Gastrocnemius medialis (tissue), 4 donors: ENCODE measurements at regions of chr11 and their contacts with region 1.

Region 1: DNA sequence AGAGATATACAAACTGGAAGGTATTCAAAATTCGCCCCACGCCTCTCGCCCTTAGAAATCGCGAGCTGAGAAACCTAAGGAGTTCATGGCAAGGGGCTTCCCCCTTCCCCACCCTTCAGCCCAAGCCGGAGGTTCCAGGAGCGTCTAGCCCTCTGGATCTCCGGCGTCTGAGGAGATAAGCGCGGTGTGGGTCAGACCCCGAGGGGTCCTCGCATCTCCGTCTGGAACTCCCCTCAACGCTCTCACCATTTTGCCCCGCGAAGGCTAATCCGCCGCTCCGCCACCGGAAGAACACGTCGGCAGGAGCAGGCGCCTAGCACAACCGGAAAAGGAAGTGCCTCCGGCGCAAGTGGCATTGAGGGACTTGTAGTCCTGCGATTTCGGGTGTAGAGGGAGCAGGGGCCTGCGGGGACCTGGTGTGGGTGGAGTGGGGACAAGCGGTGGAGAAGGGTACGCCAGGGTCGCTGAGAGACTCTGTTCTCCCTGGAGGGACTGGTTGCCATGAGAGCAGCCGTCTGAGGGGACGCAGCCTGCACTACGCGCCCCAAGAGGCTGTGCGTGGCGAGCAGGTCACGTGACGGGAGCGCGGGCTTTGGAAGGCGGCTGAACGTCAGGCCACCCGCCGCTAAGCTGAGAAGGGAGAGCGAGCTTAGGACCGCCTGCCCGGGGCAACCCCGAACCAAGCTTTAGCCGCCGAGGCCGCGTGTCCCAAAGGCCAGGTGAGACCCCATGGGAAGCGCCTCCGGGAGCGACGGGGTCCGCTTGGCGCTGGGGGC is at the starts of genes FEN1 and TMEM258:
- DNase-seq: peak; percentile 81 to 83
- ATAC-seq: peak; percentile 95 to 98
- H3K4me3 ChIP-seq: peak within 1 kb of the TSS; percentile 73 to 97 (median 88)
- H3K27ac ChIP-seq: peak within 1 kb of the TSS; percentile 90 to 98 (median 96)
- H3K4me1 ChIP-seq: peaks cover 20 to 22% of the 10 kb centered on the region in 2 donors
- H3K27me3 ChIP-seq: no peaks in the 10 kb centered on the region
- CTCF ChIP-seq: peak in 3 of 5 experiments; percentile 35 to 39 (median 37)
- POLR2A ChIP-seq: peak; percentile 58
- total RNA-seq, gene FEN1: 7.4 to 15.7 (median 9.5) TPM
- total RNA-seq, gene TMEM258: 36.5 to 51.8 (median 47.2) TPM

Region 2: DNA sequence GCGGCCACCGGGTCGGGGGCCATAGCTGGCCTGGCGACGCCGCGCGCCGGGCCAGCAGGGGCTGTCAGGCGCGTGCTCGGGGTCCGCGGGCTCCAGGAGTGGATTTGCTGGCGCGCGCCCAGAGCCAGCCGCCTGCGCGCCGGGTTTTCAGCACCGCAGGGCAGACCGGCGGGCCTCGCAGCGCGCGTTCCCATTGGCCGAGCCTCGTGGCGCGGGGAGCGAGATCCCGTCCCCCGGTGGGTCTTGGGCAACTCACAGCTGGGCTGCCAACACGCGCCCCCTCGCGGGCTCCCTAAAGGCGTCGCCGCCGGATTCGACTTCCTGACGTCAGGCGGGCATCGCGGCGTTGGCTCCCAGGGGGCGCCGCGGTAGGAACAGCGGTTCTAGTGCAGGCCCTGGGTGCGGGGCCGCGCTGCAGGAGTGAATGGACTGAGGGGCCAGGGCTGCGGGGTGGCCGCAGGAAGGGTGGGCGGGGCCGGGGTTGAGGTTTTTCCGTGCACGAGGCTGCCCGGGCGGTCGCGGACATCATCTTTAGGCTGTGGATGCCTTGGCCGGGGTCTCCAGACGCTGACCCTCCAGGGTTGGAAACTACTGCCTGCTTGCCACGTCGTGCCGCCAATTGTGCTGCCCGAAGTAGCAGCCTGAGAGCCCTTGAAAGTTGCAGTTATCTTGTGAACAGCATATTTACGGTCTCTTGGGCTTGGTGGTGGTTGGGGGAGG is 24.4 kb after region 1 on chr11 and contains the start of gene FADS1:
- in situ Hi-C with region 1: no loop called
- intact Hi-C with region 1: loop called (anchors 1 kb)
- DNase-seq: peak; percentile 57 to 79
- ATAC-seq: peak; percentile 17 to 25
- H3K4me3 ChIP-seq: peak within 1 kb of the TSS; percentile 64 to 88 (median 80)
- H3K27ac ChIP-seq: peak within 1 kb of the TSS; percentile 87 to 92 (median 90)
- H3K4me1 ChIP-seq: peaks cover 11 to 17% of the 10 kb centered on the region in 2 donors
- H3K27me3 ChIP-seq: no peaks in the 10 kb centered on the region
- CTCF ChIP-seq: peak in 3 of 5 experiments; percentile 33 to 50 (median 48)
- POLR2A ChIP-seq: peak; percentile 40 to 62
- total RNA-seq, gene FADS1: 25.4 to 209 (median 62.5) TPM

Region 3: GRCh38 chr11:61891331-61892084 is 99.0 kb after region 1 on chr11 and contains the start of gene FADS3:
- in situ Hi-C with region 1: loop called in 1 of 4 experiments (anchors 10 kb)
- intact Hi-C with region 1: loop called (anchors 1 kb)
- DNase-seq: peak; percentile 84 to 92
- ATAC-seq: peak; percentile 53 to 58
- H3K4me3 ChIP-seq: peak within 1 kb of the TSS; percentile 73 to 98 (median 90)
- H3K27ac ChIP-seq: peak within 1 kb of the TSS; percentile 82 to 96 (median 92)
- H3K4me1 ChIP-seq: peaks cover 32 to 34% of the 10 kb centered on the region in 2 donors
- H3K27me3 ChIP-seq: no peaks in the 10 kb centered on the region
- CTCF ChIP-seq: peak in 4 of 5 experiments; percentile 4 to 30 (median 15)
- POLR2A ChIP-seq: peak; percentile 92 to 98
- total RNA-seq, gene FADS3: 40.7 to 196 (median 89.0) TPM

Region 4: GRCh38 chr11:61947486-61948210 is 155.2 kb after region 1 on chr11:
- in situ Hi-C with region 1: no loop called
- intact Hi-C with region 1: loop called (anchors 1 kb)
- DNase-seq: peak; percentile 72 to 82
- ATAC-seq: peak; percentile 89 to 91
- H3K4me3 ChIP-seq: no peak overlapping the region
- H3K27ac ChIP-seq: no peak overlapping the region
- H3K4me1 ChIP-seq: no peaks in the 10 kb centered on the region
- H3K27me3 ChIP-seq: no peaks in the 10 kb centered on the region
- CTCF ChIP-seq: peak; percentile 80 to 92 (median 90)
- POLR2A ChIP-seq: no peak

Region 5: GRCh38 chr11:62108017-62108750 is 315.7 kb after region 1 on chr11:
- in situ Hi-C with region 1: loop called in 3 of 4 experiments (anchors 5 to 10 kb)
- intact Hi-C with region 1: loop called (anchors 2 kb)
- DNase-seq: no peak
- ATAC-seq: peak; percentile 42 to 79
- H3K4me3 ChIP-seq: no peak overlapping the region
- H3K27ac ChIP-seq: no peak overlapping the region
- H3K4me1 ChIP-seq: peaks cover 15 to 16% of the 10 kb centered on the region in 2 donors
- H3K27me3 ChIP-seq: no peaks in the 10 kb centered on the region
- CTCF ChIP-seq: peak; percentile 52 to 88 (median 83)
- POLR2A ChIP-seq: no peak

Region 6: DNA sequence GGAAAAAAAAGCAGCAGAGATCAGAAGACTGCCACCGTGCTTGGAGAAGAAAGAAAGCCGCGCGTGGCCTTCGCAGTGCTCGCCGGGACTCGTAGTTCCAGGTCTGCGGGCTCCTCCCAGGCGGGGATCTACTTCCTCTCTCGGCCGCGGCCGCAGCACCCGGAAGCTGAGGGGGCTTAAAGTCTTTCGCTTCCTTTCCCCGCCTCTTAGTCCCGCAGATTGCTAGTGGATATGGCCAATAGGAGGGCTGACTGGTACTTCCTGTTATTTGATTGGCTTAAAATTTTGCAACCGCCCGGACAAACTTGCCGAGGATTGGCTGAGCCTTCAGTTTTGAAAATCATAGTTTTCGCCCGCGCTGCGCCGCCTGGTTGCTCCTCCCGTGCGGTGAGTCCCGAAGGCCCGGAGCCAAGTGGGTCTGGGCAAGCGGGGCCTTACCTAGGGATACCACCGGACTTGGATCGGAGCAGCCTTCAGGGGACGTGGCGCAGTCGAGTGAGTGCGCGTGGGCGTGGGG is 331.2 kb after region 1 on chr11 and contains the start of gene INCENP:
- in situ Hi-C with region 1: loop called in 1 of 4 experiments (anchors 10 kb)
- intact Hi-C with region 1: loop called (anchors 2 kb)
- DNase-seq: peak; percentile 96 to 97
- ATAC-seq: peak; percentile 100
- H3K4me3 ChIP-seq: peak within 1 kb of the TSS; percentile 81 to 85 (median 84)
- H3K27ac ChIP-seq: peak within 1 kb of the TSS; percentile 74 to 84 (median 82)
- H3K4me1 ChIP-seq: peaks cover 10 to 13% of the 10 kb centered on the region in 2 donors
- H3K27me3 ChIP-seq: no peaks in the 10 kb centered on the region
- CTCF ChIP-seq: peak in 1 of 5 experiments; percentile 21
- POLR2A ChIP-seq: peak in 1 of 2 donors; percentile 28
- total RNA-seq, gene INCENP: 6.3 to 18.7 (median 13.7) TPM